Mammary epithelial cell (primary cell): ENCODE measurements at regions of chr12 and their contacts with region 1.

Region 1: GRCh38 chr12:109637348-109637747 is 63.8 kb downstream of the MVK start:
- DNase-seq: no peak
- H3K4me3 ChIP-seq: no peak overlapping the region
- H3K27ac ChIP-seq: no peak overlapping the region
- H3K4me1 ChIP-seq: no peaks in the 10 kb centered on the region
- H3K27me3 ChIP-seq: no peaks in the 10 kb centered on the region
- CTCF ChIP-seq: no peak

Region 2: DNA sequence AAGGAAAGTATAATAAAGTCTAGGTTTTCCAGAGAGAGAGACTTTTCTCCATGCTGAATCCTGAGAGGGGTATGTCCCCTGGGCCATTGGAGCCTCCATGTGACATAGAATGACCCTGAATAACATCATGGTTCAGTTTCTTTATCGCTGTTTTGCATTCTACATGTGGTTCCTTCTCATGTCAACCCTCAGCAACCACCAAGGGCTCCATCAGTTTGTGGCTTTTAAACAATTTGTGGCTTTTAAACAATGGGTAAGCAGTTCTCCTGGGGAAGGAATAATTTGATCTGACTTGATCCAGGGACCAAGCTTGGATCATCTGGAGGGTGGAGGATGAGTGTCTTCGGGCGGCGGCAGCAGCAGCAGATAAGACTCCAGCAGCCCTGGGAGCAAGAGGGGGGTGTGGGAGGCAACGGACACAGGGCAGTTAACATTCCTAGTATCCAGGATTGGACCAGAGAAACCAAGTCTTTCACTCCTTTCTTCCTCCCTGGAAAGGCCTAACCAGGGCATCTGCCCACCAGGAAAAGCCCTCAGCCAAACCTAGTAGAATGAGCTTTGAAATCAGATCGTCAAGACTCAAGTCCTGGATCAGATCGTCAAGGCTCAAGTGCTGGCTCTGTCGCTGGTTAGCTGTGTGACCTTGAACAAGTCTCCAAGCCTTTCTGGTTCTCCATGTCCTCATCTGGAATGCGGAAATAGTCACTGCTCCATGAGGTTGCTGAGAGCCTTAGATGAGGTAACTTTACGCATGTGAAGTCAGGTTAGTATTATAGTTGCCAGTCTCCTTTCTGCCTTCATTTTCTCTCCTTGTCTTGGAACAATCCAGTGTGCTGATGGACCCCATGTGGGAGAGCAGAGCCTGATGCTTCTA is 48.5 kb after region 1 on chr12:
- CTCF ChIA-PET with region 1: no interaction called
- dilution Hi-C with region 1: loop called (anchors 5 kb)
- in situ Hi-C with region 1: no loop called
- intact Hi-C with region 1: no loop called
- DNase-seq: no peak
- H3K4me3 ChIP-seq: no peak overlapping the region
- H3K27ac ChIP-seq: no peak overlapping the region
- H3K4me1 ChIP-seq: no peaks in the 10 kb centered on the region
- H3K27me3 ChIP-seq: peaks cover 3% of the 10 kb centered on the region
- CTCF ChIP-seq: no peak

Region 3: DNA sequence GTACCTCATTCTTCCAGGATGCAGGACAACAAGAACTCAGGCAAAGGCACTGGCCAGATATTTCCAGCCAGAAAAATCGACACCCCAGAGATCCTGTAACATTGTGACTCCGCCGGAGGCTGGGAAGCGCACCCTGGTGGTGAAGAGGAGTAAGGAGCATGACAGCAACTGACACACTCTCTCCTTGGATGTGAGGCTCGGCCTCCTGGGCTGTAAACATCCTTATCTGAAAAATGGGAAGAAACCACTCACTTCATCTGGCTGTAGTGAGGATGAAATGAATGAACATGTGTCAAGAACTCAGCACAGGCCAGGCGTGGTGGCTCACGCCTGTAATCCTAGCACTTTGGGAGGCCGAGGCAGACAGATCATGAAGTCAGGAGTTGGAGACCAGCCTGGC is 290.3 kb after region 1 on chr12:
- CTCF ChIA-PET with region 1: no interaction called
- dilution Hi-C with region 1: no loop called
- in situ Hi-C with region 1: no loop called
- intact Hi-C with region 1: no loop called
- DNase-seq: no peak
- H3K4me3 ChIP-seq: no peak overlapping the region
- H3K27ac ChIP-seq: no peak overlapping the region
- H3K4me1 ChIP-seq: no peaks in the 10 kb centered on the region
- H3K27me3 ChIP-seq: no peaks in the 10 kb centered on the region
- CTCF ChIP-seq: peak; percentile 79 to 84